Natural killer cell (primary cell): ENCODE measurements at regions of chr11 and their contacts with region 1.

Region 1: GRCh38 chr11:1050581-1051355 is 14.2 kb upstream of the MUC6 start:
- DNase-seq: peak; percentile 63 to 85
- ATAC-seq: peak in 2 of 3 donors; percentile 98 to 99
- H3K4me3 ChIP-seq: no peak overlapping the region
- H3K4me3 Mint-ChIP-seq: no peak overlapping the region
- H3K27ac ChIP-seq: no peak overlapping the region
- H3K27ac Mint-ChIP-seq: no peak overlapping the region
- H3K4me1 ChIP-seq: peaks cover 18% of the 10 kb centered on the region
- H3K4me1 Mint-ChIP-seq: peaks cover 18% of the 10 kb centered on the region in 2 donors
- H3K27me3 ChIP-seq: peaks cover 5% of the 10 kb centered on the region
- H3K27me3 Mint-ChIP-seq: peaks cover 0 to 7% of the 10 kb centered on the region in 2 donors
- CTCF ChIP-seq: peak; percentile 81

Region 2: DNA sequence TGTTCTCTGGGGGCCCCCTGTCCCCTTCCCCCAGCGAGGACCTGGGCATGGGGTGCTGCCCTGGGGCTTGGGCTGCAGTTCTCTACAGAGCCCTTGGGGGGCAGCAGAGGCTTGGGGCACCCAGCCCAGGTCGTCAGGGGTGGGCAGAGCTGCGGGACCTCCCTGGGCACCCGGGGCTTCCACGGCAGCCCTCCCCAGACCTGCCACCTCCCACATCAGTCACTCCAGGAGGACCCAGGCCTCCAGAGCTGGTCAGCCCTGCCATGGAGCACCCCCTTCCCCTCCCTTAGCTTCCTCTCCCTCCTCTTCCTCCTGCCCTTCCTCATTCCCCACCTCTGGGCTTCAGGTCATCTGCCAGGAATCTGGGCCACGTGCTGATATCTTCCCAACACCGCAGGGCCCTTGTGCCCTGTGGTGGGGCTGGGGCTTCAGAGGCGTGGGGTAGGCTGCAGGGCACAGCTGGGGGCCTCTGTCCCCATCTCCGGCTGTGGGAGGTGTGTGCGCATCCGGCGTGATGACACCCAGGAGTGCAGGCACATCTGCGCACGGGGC is 202.3 kb before region 1 on chr11:
- intact Hi-C with region 1: loop called (anchors 1 kb)
- DNase-seq: peak; percentile 65 to 80
- ATAC-seq: peak; percentile 81 to 84 (median 82)
- H3K4me3 ChIP-seq: no peak overlapping the region
- H3K4me3 Mint-ChIP-seq: peak overlapping the region; percentile 55
- H3K27ac ChIP-seq: no peak overlapping the region
- H3K27ac Mint-ChIP-seq: no peak overlapping the region
- H3K4me1 ChIP-seq: peaks cover 36% of the 10 kb centered on the region
- H3K4me1 Mint-ChIP-seq: peaks cover 0 to 26% of the 10 kb centered on the region in 2 donors
- H3K27me3 ChIP-seq: peaks cover 6% of the 10 kb centered on the region
- H3K27me3 Mint-ChIP-seq: no peaks in the 10 kb centered on the region
- CTCF ChIP-seq: peak; percentile 79

Region 3: DNA sequence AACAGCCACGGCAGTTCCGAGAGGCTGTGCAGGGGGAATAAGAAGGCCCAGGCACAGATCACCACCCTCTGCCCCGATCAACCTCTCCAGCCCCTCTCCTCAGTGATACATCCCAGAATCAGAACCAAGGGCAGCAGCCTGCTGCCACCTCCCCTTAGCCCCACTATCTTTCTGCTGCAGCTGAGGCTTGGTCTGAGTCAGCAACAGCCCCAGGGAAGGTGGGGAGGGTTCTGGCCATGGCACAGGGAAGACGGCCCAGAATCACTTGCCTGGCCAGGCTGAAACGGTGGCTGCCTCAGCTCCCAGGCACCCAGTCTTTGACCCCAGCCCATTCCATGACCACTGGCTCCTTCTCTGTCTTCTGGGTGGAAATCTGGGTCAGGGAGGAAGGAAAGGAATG is 142.5 kb before region 1 on chr11:
- intact Hi-C with region 1: no loop called
- DNase-seq: no peak
- ATAC-seq: no peak
- H3K4me3 ChIP-seq: no peak overlapping the region
- H3K4me3 Mint-ChIP-seq: peak overlapping the region; percentile 42
- H3K27ac ChIP-seq: no peak overlapping the region
- H3K27ac Mint-ChIP-seq: no peak overlapping the region
- H3K4me1 ChIP-seq: peaks cover 26% of the 10 kb centered on the region
- H3K4me1 Mint-ChIP-seq: peaks cover 13 to 16% of the 10 kb centered on the region in 2 donors
- H3K27me3 ChIP-seq: no peaks in the 10 kb centered on the region
- H3K27me3 Mint-ChIP-seq: no peaks in the 10 kb centered on the region
- CTCF ChIP-seq: no peak

Region 4: DNA sequence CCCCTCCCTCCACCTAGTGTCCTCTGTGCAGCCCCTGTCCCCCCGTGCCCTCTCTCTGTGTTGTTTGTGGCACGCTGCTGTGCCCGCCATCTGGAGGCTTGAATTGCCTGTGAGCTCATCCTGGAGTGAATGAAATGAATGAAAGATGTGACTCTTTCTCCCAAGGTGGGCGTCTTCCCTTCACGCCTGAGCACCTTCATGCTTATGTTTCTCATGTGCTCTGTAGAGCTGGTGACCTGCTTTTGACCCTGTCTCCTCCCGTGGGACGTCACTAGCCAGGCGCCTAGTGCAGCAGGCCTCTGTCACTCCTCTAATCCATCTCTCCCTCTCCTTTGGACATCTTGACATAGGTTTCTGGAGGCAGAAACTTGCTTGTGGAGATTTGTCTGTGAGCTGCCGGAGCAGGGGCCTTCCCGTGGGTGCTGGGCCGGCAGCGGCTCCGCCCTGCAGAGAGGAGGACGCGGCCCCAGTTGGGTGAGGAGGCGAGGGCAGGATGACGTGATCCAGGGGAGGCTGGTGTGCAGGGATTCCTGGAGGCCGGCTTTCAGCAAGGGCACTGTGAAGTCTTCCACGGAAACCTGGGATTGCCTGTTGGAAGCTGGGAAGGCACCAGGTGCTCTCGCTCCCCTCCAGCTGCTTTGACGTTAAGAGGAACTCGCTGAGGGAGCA is 54.9 kb before region 1 on chr11:
- intact Hi-C with region 1: no loop called
- DNase-seq: no peak
- ATAC-seq: no peak
- H3K4me3 ChIP-seq: no peak overlapping the region
- H3K4me3 Mint-ChIP-seq: peak overlapping the region; percentile 21
- H3K27ac ChIP-seq: no peak overlapping the region
- H3K27ac Mint-ChIP-seq: peak overlapping the region; percentile 79 to 83
- H3K4me1 ChIP-seq: peaks cover 10% of the 10 kb centered on the region
- H3K4me1 Mint-ChIP-seq: peaks cover 23 to 30% of the 10 kb centered on the region in 2 donors
- H3K27me3 ChIP-seq: no peaks in the 10 kb centered on the region
- H3K27me3 Mint-ChIP-seq: no peaks in the 10 kb centered on the region
- CTCF ChIP-seq: no peak

Region 5: DNA sequence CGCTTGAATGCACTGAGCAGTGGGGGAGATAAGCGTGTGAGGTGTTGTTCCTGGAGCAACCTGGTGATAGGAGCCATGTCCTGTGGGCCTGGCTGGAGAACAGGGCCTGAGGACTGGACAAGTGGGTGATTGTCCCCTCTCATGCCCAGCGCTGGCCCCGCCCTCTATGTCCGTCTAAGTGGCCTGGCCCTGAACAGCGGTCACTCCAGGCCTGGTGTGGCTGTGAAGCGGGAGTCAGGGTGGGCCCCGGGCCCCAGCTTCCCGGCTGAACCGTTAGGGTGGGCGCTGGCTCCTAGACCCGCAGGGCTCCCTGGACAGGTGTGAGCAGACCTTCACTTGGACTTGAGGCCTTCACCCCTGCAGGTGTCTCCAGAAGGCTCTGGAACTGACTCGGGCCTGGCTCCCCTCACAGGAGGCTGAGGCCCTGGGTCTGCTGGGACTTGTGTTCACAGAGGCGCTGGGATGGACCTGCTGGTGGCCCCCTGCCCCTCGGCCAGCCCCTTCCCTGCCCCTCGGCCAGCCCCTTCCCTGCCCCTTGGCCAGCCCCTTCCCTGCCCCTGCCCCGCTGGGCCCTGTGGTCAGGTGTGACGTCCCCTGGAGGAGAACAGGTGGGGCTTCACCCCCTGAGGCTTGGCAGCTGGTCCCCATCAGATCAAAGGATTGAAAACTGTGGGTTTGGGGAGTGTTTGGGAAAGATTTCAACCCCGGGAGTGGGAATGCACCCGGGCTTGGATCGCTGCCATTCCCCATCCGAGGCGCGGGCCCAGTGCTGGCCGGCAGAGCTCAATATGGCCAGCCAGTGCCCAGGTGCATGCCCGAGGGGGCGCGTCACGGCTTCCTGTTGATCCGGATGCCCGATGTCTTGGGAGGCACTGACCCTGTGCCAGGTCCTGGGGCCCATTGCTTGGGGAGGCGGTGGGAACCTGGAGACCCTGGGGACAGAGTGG is 11.0 kb before region 1 on chr11:
- intact Hi-C with region 1: no loop called
- DNase-seq: no peak
- ATAC-seq: no peak
- H3K4me3 ChIP-seq: no peak overlapping the region
- H3K4me3 Mint-ChIP-seq: no peak overlapping the region
- H3K27ac ChIP-seq: no peak overlapping the region
- H3K27ac Mint-ChIP-seq: no peak overlapping the region
- H3K4me1 ChIP-seq: no peaks in the 10 kb centered on the region
- H3K4me1 Mint-ChIP-seq: no peaks in the 10 kb centered on the region
- H3K27me3 ChIP-seq: no peaks in the 10 kb centered on the region
- H3K27me3 Mint-ChIP-seq: no peaks in the 10 kb centered on the region
- CTCF ChIP-seq: no peak